ENCODE measurements at regions of chr2 and their contacts with region 1.

Region 1: GRCh38 chr2:190415794-190416775 is 7.9 kb downstream of the MFSD6 start:
- DNase-seq: no peak
- ATAC-seq: no peak
- H3K4me3 ChIP-seq: no peak overlapping the region
- H3K27ac ChIP-seq: peak overlapping the region; percentile 27 to 63 (median 56)
- H3K4me1 ChIP-seq: peaks cover 11 to 25% of the 10 kb centered on the region in 2 donors
- H3K27me3 ChIP-seq: no peaks in the 10 kb centered on the region
- CTCF ChIP-seq: no peak
- POLR2A ChIP-seq: no peak

Region 2: GRCh38 chr2:190459881-190460280 is 43.8 kb after region 1 on chr2:
- in situ Hi-C with region 1: no loop called
- intact Hi-C with region 1: loop called (anchors 5 kb)
- DNase-seq: no peak
- ATAC-seq: no peak
- H3K4me3 ChIP-seq: no peak overlapping the region
- H3K27ac ChIP-seq: no peak overlapping the region
- H3K4me1 ChIP-seq: no peaks in the 10 kb centered on the region
- H3K27me3 ChIP-seq: no peaks in the 10 kb centered on the region
- CTCF ChIP-seq: no peak
- POLR2A ChIP-seq: no peak

Measured in gastrocnemius medialis (tissue), 4 donors.